ENCODE measurements at regions of chr9 and their contacts with region 1.

Region 1: GRCh38 chr9:107260437-107261086 is 22.5 kb upstream of the RAD23B start:
- DNase-seq: peak; percentile 83
- ATAC-seq: peak; percentile 95
- H3K4me3 ChIP-seq: peak overlapping the region in 3 of 5 experiments; percentile 20 to 43 (median 23)
- H3K4me3 Mint-ChIP-seq: peak overlapping the region; percentile 81
- H3K27ac ChIP-seq: peak overlapping the region; percentile 57 to 58
- H3K27ac Mint-ChIP-seq: peak overlapping the region; percentile 81
- H3K4me1 ChIP-seq: peaks cover 22 to 26% of the 10 kb centered on the region in 2 donors
- H3K4me1 Mint-ChIP-seq: peaks cover 25% of the 10 kb centered on the region
- H3K27me3 ChIP-seq: no peaks in the 10 kb centered on the region
- H3K27me3 Mint-ChIP-seq: peaks cover 6% of the 10 kb centered on the region
- CTCF ChIP-seq: no peak

Region 2: GRCh38 chr9:107292821-107293542 is 32.4 kb after region 1 on chr9:
- CTCF ChIA-PET with region 1: interaction called, 11 read pairs
- POLR2A ChIA-PET with region 1: no interaction called
- intact Hi-C with region 1: loop called (anchors 5 kb)
- DNase-seq: no peak
- ATAC-seq: no peak
- H3K4me3 ChIP-seq: no peak overlapping the region
- H3K4me3 Mint-ChIP-seq: no peak overlapping the region
- H3K27ac ChIP-seq: no peak overlapping the region
- H3K27ac Mint-ChIP-seq: no peak overlapping the region
- H3K4me1 ChIP-seq: peaks cover 32 to 52% of the 10 kb centered on the region in 2 donors
- H3K4me1 Mint-ChIP-seq: peaks cover 67% of the 10 kb centered on the region
- H3K27me3 ChIP-seq: no peaks in the 10 kb centered on the region
- H3K27me3 Mint-ChIP-seq: no peaks in the 10 kb centered on the region
- CTCF ChIP-seq: no peak

Region 3: DNA sequence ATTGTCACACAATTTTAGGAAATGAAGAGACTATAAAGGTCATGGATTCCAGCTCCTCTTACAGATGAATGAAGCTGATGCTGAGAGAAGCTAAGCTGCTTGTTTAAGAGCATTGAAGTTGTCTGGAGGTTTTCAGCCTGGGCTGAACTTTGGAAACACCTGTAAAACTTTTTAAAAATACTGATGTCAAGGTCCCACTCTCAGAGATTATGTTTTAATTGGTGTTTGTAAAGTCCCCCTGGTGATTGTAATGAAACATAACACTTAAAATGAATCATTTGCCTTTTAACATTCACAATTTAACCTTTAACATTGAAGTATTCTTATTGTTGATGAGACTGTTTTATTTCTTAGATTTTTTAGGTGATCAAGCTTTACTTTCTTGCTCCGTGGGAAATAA is 38.9 kb after region 1 on chr9:
- CTCF ChIA-PET with region 1: interaction called, 16 read pairs
- POLR2A ChIA-PET with region 1: no interaction called
- intact Hi-C with region 1: loop called (anchors 5 kb)
- DNase-seq: peak; percentile 24
- ATAC-seq: no peak
- H3K4me3 ChIP-seq: no peak overlapping the region
- H3K4me3 Mint-ChIP-seq: no peak overlapping the region
- H3K27ac ChIP-seq: peak overlapping the region in 1 of 2 donors; percentile 29
- H3K27ac Mint-ChIP-seq: no peak overlapping the region
- H3K4me1 ChIP-seq: peaks cover 5 to 25% of the 10 kb centered on the region in 2 donors
- H3K4me1 Mint-ChIP-seq: peaks cover 43% of the 10 kb centered on the region
- H3K27me3 ChIP-seq: no peaks in the 10 kb centered on the region
- H3K27me3 Mint-ChIP-seq: no peaks in the 10 kb centered on the region
- CTCF ChIP-seq: peak; percentile 65